ENCODE measurements at regions of chr11 and their contacts with region 1.

Region 1: GRCh38 chr11:65506770-65507505 is 8.1 kb downstream of the MALAT1 start:
- DNase-seq: no peak
- ATAC-seq: peak; percentile 49
- H3K4me3 Mint-ChIP-seq: no peak overlapping the region
- H3K27ac Mint-ChIP-seq: peak overlapping the region; percentile 84
- H3K4me1 Mint-ChIP-seq: peaks cover 62% of the 10 kb centered on the region
- H3K27me3 Mint-ChIP-seq: no peaks in the 10 kb centered on the region
- CTCF ChIP-seq: no peak

Region 2: GRCh38 chr11:65288706-65289536 is 218.0 kb before region 1 on chr11:
- CTCF ChIA-PET with region 1: no interaction called
- POLR2A ChIA-PET with region 1: no interaction called
- intact Hi-C with region 1: no loop called
- DNase-seq: no peak
- ATAC-seq: no peak
- H3K4me3 Mint-ChIP-seq: no peak overlapping the region
- H3K27ac Mint-ChIP-seq: no peak overlapping the region
- H3K4me1 Mint-ChIP-seq: no peaks in the 10 kb centered on the region
- H3K27me3 Mint-ChIP-seq: no peaks in the 10 kb centered on the region
- CTCF ChIP-seq: no peak

Region 3: GRCh38 chr11:65354265-65355012 is 152.5 kb before region 1 on chr11 and contains the start of gene TIGD3:
- CTCF ChIA-PET with region 1: interaction called, 3 read pairs
- POLR2A ChIA-PET with region 1: interaction called, 11 read pairs
- intact Hi-C with region 1: no loop called
- DNase-seq: peak; percentile 96
- ATAC-seq: peak; percentile 97
- H3K4me3 Mint-ChIP-seq: peak within 1 kb of the TSS; percentile 91
- H3K27ac Mint-ChIP-seq: peak within 1 kb of the TSS; percentile 83
- H3K4me1 Mint-ChIP-seq: peaks cover 23% of the 10 kb centered on the region
- H3K27me3 Mint-ChIP-seq: no peaks in the 10 kb centered on the region
- CTCF ChIP-seq: no peak
- total RNA-seq, gene TIGD3: 1.4 and 1.6 TPM in 2 replicates

Region 4: GRCh38 chr11:65524741-65525545 is 18.0 kb after region 1 on chr11 and contains the start of gene SCYL1:
- CTCF ChIA-PET with region 1: no interaction called
- POLR2A ChIA-PET with region 1: interaction called, 18 read pairs
- intact Hi-C with region 1: no loop called
- DNase-seq: peak; percentile 78
- ATAC-seq: peak; percentile 95
- H3K4me3 Mint-ChIP-seq: peak within 1 kb of the TSS; percentile 81
- H3K27ac Mint-ChIP-seq: peak within 1 kb of the TSS; percentile 66
- H3K4me1 Mint-ChIP-seq: peaks cover 47% of the 10 kb centered on the region
- H3K27me3 Mint-ChIP-seq: no peaks in the 10 kb centered on the region
- CTCF ChIP-seq: no peak
- total RNA-seq, gene SCYL1: 70.0 and 75.7 TPM in 2 replicates

Region 5: GRCh38 chr11:65680192-65680743 is 173.3 kb after region 1 on chr11:
- CTCF ChIA-PET with region 1: no interaction called
- POLR2A ChIA-PET with region 1: no interaction called
- intact Hi-C with region 1: no loop called
- DNase-seq: no peak
- ATAC-seq: no peak
- H3K4me3 Mint-ChIP-seq: no peak overlapping the region
- H3K27ac Mint-ChIP-seq: no peak overlapping the region
- H3K4me1 Mint-ChIP-seq: no peaks in the 10 kb centered on the region
- H3K27me3 Mint-ChIP-seq: no peaks in the 10 kb centered on the region
- CTCF ChIP-seq: no peak

Measured in activated B cell treated with CpG ODN at 0.5 μM for 24 hours (primary cell).